ENCODE measurements at regions of chr5 and their contacts with region 1.

Region 1: DNA sequence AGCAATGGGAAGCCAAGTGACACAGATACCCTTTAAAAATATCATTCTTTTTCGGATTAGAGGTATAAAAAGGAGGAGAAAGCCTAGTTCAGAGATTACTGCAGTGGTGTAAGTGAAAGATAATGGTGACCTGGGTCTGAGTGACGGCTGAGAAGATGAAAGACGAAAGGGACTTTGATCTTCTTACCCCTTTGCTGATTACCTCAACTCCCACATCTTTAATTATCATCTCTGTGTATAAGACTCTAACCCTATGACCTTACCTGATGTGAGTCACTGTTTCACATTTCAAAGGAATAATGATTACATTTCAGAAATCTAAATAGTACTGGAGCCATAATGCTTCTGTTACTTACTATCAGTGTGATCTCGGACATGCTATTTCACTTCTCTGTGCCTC is 21.4 kb upstream of the CCNO start:
- DNase-seq: no peak
- H3K4me3 ChIP-seq: no peak overlapping the region
- H3K27ac ChIP-seq: no peak overlapping the region
- H3K4me1 ChIP-seq: no peaks in the 10 kb centered on the region
- H3K27me3 ChIP-seq: no peaks in the 10 kb centered on the region
- CTCF ChIP-seq: no peak
- POLR2A ChIP-seq: no peak

Region 2: DNA sequence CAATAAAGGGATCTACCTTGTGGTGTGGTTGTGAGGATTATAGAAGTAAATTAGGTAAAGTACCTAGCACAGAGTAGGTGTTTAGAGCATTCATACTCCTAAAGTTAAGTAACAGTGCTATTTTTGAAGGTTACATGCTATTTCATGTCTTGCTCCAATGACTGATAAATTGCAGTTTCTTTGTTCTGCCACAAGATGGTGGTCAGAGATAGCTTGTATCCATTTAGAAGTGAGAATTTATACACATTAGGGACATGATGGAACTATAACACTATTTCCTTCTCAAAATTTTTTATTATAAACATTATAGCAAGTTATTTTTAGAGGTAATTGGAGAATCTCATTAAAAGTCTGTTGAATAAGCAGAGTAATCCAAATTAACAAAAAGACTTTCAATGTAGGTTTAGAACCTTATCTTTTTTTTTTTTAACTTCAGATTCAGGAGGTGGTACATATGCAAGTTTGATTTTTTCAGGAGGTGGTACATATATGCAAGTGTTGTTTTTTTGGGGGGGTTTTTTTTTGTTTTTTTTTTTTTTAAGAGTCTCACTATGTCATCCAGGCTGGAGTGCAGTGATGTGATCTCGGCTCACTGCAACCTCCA is 70.1 kb after region 1 on chr5:
- intact Hi-C with region 1: no loop called
- DNase-seq: no peak
- H3K4me3 ChIP-seq: no peak overlapping the region
- H3K27ac ChIP-seq: no peak overlapping the region
- H3K4me1 ChIP-seq: peaks cover 0 to 26% of the 10 kb centered on the region in 2 donors
- H3K27me3 ChIP-seq: no peaks in the 10 kb centered on the region
- CTCF ChIP-seq: peak; percentile 38 to 77 (median 68)
- POLR2A ChIP-seq: no peak

Region 3: GRCh38 chr5:55356896-55357295 is 102.1 kb after region 1 on chr5:
- intact Hi-C with region 1: loop called in 1 of 2 experiments (anchors 10 kb)
- DNase-seq: no peak
- H3K4me3 ChIP-seq: no peak overlapping the region
- H3K27ac ChIP-seq: no peak overlapping the region
- H3K4me1 ChIP-seq: no peaks in the 10 kb centered on the region
- H3K27me3 ChIP-seq: no peaks in the 10 kb centered on the region
- CTCF ChIP-seq: no peak
- POLR2A ChIP-seq: no peak

Measured in adrenal gland (tissue), 19 donors.